Dorsolateral prefrontal cortex (tissue), 120 donors: ENCODE measurements at regions of chr6 and their contacts with region 1.

Region 1: DNA sequence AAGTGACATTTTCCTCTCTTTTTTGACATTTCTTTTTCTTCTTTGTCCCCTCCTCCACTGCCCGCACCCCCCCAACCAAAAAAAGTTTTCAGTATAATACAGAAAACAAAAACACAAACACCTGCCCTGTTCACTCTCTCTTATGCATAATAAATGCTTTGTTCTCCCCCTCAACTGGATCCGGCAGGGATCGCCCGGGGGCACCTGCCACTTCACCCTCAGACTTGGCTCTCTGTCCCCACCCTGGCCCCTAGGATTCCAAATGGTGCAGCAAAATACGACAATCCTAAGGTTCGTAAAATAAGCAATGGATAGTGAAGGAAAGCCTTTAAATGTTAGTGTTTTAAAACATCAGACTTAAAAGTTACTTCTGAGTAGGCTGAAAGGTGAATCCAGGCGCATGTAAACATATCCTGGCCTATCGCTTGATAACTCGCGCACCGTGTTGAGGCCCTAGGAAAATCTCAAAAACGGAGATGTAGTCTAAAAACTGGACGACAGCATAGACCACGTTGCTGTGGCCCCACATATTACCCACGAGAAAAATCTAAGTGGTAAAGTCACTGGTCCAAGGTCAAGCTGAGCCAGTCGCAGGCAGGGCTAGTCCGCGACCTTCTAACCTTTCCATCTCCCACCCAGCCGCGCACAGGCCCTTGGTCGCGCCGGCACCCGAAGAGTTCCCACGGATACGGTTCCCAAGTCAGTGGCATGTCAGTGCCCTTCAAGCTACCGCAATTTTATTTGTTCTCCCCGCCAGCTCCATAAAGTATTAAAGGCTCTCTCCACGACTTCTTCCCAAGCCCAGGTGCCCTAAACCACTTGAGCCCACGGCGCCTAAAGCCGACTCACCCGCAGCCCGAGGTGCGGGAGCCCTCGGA is 130.8 kb downstream of the OGFRL1 start:
- DNase-seq: peak in 3 of 10 donors; percentile 11 to 46 (median 22)
- H3K4me3 ChIP-seq: peak overlapping the region; percentile 53 to 98 (median 89)
- H3K27ac ChIP-seq: peak overlapping the region in 58 of 59 donors; percentile 44 to 98 (median 91)
- H3K27me3 ChIP-seq: no peaks in the 10 kb centered on the region
- CTCF ChIP-seq: no peak

Region 2: DNA sequence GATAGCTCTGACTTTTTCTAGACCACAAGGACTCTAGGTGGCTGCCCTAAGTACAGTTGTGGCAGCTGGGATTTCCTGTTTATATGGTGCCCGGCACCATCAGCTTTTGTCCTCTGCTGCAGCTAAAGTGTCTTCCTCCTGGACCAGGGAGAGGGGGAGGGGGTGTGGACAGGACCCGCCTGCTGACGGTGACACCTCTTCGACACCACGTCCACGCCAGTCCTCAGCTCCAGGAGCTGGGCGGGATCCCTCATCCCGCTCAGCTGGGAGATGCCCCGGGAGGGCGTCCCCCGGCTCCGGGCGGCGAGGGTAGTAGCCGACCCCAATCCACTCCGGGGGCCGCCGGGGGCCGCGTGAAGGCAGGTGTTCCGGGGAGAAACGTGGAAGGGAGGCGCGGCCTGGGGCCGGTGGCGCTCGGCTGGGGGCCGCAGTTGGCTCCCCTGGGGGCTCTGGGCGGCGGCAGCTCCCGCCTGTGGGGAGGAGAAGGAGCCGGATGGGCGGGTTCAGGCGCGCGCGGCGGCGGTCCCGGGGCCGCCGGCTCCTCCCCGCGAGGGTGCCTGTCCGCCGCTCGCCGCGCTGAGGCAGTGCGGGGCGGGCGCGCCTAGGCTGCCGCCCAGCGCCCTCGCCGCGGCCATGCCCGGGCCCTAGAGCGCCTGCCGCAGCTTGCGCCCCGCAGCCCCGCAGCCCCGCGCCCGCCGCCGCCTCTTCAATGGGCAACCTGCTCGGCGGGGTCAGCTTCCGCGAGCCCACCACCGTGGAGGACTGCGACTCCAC is 131.0 kb before region 1 on chr6 and contains the start of gene OGFRL1:
- intact Hi-C with region 1: loop called in 1 of 2 experiments (anchors 5 kb)
- DNase-seq: peak in 9 of 10 donors; percentile 52 to 84 (median 64)
- H3K4me3 ChIP-seq: peak within 1 kb of the TSS; percentile 44 to 93 (median 78)
- H3K27ac ChIP-seq: peak within 1 kb of the TSS; percentile 40 to 98 (median 94)
- H3K27me3 ChIP-seq: no peaks in the 10 kb centered on the region
- CTCF ChIP-seq: peak in 8 of 56 donors; percentile 0 to 32 (median 15)
- total RNA-seq, gene OGFRL1: 51.0 to 159 (median 84.2) TPM

Region 3: DNA sequence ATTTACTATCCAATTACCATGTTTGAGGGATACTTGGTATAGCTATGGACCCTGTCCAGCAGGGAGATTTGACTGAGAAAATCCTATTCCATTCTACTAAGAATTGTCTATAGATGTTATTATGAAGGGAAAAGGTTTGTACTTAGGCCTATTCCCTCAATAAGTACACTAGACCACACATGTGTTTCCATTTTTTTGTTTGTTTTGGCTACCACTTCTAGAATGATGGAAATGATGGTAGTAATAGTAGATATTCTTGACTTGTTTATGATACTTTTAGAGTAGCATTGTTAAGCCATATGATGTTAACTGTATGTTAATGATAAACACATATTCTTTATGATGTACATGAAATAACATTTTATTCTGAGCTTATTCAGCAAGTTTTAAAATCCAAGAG is 14.0 kb after region 1 on chr6:
- intact Hi-C with region 1: no loop called
- DNase-seq: no peak
- H3K4me3 ChIP-seq: no peak overlapping the region
- H3K27ac ChIP-seq: no peak overlapping the region
- H3K27me3 ChIP-seq: peaks cover 0 to 15% (median 0%) of the 10 kb centered on the region in 45 donors
- CTCF ChIP-seq: no peak